ENCODE measurements at regions of chr19 and their contacts with region 1.

Region 1: DNA sequence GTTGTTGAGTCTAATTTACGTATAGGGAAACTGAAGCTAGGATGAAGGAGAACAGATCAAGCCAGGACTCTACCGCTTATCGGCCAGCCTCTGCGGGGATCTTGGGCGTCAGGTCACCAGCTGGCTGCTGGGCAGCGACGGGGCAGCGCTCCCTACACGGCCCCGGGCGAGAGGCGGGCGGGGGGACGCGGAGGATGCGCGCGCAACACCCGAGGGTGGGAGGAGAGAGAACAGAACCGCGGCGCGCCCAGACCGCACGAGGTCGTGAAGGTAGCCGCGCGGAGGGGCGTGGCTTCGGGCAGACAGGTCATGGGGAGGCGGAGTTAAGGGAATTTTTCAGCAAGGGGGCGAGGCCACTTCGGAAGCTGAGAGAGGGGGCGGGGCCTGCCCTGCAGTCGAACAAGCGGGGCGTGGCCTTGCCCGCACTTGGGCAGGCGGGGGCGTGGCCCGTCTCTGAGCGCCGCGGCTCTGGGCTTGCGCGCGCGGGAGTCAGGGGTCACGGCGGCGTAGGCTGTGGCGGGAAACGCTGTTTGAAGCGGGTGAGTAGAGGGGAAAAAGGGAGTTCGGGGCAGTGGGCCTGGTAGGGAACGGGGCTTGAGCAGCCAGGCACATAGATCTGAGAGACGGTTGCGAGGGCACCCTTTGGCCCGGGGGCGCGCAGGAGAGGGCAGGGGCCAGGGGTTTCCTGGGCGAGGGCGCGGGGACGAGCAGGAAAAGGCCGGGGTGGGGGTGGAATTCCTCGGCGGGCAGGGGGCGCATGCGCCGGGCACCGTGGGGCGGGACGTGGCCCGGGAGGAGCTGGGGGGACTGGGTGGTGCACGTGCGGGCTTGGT is at the start of gene POLD1:
- DNase-seq: peak; percentile 100
- ATAC-seq: peak; percentile 92
- H3K4me3 Mint-ChIP-seq: peak within 1 kb of the TSS; percentile 99
- H3K27ac Mint-ChIP-seq: peak within 1 kb of the TSS; percentile 93
- H3K4me1 Mint-ChIP-seq: peaks cover 27% of the 10 kb centered on the region
- H3K27me3 Mint-ChIP-seq: no peaks in the 10 kb centered on the region
- total RNA-seq, gene POLD1: 220 to 227 TPM

Region 2: DNA sequence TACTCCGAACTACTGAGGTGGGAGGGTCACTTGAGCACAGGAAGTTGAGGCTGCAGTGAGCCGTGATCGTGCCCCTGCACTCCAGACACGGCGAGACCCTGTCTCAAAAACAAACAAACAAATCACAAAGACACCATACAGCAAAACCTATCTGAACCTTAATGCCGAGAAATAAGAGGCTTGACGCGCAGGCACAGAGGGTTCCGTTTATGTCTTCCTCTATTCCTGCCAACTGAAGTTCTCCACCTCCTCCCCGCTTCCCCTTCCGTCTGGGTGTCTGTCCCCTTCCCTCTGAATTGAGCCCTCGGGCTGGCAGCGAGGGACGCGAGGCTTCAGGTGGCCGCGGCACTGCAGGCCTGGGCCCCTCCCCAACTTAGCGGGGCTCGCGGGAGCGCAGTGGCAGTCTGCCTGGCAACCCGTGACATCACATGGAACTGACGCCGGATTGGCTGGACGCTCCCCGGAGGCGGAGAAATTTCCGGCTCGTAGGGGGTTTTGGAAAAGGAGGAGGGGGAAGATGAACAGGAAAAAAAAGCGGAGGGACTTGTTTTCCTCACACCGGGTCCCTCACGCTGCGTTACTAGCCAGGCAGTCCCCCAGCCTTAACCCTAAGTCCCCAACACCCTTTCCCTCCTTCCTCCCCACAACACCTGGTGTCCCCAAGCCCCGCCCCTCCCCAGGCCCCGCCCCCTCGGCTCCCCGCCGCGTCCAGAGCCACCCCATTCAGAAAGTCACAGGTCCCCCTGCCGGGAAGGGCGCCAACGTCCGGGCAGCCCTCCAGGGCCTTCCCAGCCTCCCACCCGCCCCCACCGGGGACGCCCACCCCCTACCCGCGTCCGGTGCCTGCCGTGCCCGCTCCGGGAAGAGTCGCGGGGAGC is 47.5 kb after region 1 on chr19:
- CTCF ChIA-PET with region 1: no interaction called
- POLR2A ChIA-PET with region 1: no interaction called
- intact Hi-C with region 1: loop called in 1 of 2 experiments (anchors 1 kb)
- DNase-seq: peak; percentile 92
- ATAC-seq: peak; percentile 95
- H3K4me3 Mint-ChIP-seq: peak overlapping the region; percentile 72
- H3K27ac Mint-ChIP-seq: peak overlapping the region; percentile 93
- H3K4me1 Mint-ChIP-seq: peaks cover 15% of the 10 kb centered on the region
- H3K27me3 Mint-ChIP-seq: peaks cover 6% of the 10 kb centered on the region

Region 3: GRCh38 chr19:50669302-50670101 is 285.4 kb after region 1 on chr19:
- CTCF ChIA-PET with region 1: no interaction called
- POLR2A ChIA-PET with region 1: no interaction called
- intact Hi-C with region 1: no loop called
- DNase-seq: peak; percentile 71
- ATAC-seq: no peak
- H3K4me3 Mint-ChIP-seq: no peak overlapping the region
- H3K27ac Mint-ChIP-seq: no peak overlapping the region
- H3K4me1 Mint-ChIP-seq: no peaks in the 10 kb centered on the region
- H3K27me3 Mint-ChIP-seq: peaks cover 40% of the 10 kb centered on the region